Astrocyte of the cerebellum (primary cell): ENCODE measurements at regions of chr12 and their contacts with region 1.

Region 1: GRCh38 chr12:124564232-124564958 is 3.0 kb downstream of the NCOR2 start:
- DNase-seq: no peak
- H3K4me3 ChIP-seq: peak overlapping the region; percentile 90
- CTCF ChIP-seq: no peak

Region 2: DNA sequence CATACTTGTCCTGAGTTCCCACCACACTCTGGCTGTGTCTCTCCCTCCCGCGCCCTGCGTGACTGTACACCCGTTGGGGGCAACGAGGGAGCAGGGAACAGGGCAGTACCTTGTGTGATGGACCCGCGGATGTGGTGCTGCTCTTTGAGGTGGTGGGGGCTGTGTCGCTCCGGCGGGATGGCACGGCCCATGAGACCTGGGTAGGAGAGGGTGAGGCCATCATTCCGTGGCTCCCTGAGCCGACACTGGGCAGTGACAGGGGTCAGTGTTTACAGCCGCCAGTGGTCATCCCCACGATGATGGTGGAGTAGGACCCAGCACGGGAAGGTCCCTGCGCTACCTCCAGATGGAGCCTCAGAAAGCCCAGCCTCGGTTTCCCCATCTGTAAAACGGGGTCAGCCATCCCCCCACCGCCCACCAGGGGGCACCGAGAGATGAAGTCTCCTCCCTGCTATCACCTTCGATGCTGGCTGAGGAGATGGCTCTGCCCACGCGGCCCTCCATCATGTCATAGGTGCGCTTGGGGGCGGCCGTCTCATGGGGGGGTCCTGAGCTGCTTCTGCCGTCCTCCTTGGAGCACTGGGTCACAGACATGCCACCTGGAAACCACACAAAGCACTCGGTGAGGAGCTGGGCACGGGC is 216.6 kb before region 1 on chr12:
- in situ Hi-C with region 1: no loop called
- DNase-seq: no peak
- H3K4me3 ChIP-seq: no peak overlapping the region
- CTCF ChIP-seq: peak; percentile 48

Region 3: GRCh38 chr12:124520265-124520701 is 44.1 kb before region 1 on chr12:
- in situ Hi-C with region 1: loop called (anchors 5 kb)
- DNase-seq: no peak
- H3K4me3 ChIP-seq: no peak overlapping the region
- CTCF ChIP-seq: no peak

Region 4: DNA sequence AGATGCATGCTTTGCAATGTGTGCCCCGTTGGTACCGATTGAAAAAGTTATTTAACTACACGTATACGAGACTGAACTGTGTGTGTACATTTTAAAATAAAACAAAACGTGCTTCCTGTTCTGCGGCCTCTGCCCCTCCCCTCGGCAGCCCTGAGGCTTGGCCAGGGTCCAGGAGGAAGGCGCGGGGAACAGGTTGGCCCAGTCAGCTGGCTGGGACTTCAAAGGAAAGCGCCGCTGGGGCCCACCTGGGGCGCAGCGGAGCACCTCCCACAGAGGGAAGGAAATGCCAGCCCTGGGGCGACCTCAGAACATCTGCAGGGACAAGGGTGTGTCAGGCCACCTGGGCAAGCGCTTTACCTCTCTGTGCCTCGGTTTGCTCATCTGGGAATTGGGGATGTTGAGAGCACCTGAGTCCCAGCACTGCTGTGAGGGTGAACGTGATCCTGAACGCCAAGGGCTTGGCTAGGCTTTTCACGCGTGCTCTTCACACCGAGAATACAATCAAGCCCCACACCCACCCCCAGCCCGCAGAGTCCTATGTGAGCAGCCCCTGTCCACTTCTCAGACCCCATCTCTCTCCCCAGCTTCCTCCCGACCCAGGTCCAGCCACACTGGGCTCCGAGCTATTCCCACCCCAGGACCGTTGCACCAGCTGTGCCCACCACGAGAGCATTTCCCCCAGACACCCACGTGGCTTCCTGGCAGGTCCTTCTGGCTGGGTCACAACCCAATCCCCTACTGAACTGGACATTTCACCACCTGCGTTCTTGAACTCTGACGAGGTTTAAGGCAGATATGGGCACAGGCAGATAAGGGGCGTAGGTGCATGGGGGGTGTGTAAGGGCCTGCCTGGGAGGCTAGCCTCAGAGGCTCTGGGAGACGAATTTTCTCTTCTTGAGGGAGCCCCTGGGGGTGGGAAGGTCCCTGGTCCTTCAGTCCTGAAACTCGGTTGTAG is 44.9 kb after region 1 on chr12:
- in situ Hi-C with region 1: no loop called
- DNase-seq: no peak
- H3K4me3 ChIP-seq: no peak overlapping the region
- CTCF ChIP-seq: no peak

Region 5: DNA sequence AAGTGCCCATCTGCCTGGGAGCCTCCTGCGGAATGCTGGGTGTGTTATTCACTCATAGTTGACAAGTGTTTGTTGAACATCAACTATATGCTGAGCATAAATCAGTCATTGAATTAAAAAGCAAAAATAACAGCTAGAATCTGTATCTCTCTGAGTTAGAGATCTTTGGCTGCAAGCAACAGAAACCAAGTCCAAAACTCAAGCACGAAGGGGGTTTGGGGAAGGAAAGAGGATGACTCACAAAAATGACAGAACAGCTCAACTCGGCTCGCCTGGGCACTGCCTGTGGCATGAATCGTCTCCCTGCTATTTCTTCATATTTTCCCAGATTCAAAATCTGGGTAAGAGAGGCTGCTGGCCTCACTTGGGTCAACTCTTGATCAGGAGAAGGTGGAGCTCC is 75.7 kb after region 1 on chr12:
- in situ Hi-C with region 1: no loop called
- DNase-seq: no peak
- H3K4me3 ChIP-seq: no peak overlapping the region
- CTCF ChIP-seq: no peak

Region 6: GRCh38 chr12:124754949-124755800 is 190.8 kb after region 1 on chr12:
- in situ Hi-C with region 1: loop called (anchors 5 kb)
- DNase-seq: no peak
- H3K4me3 ChIP-seq: no peak overlapping the region
- CTCF ChIP-seq: no peak